ENCODE measurements at regions of chr15 and their contacts with region 1.

Region 1: DNA sequence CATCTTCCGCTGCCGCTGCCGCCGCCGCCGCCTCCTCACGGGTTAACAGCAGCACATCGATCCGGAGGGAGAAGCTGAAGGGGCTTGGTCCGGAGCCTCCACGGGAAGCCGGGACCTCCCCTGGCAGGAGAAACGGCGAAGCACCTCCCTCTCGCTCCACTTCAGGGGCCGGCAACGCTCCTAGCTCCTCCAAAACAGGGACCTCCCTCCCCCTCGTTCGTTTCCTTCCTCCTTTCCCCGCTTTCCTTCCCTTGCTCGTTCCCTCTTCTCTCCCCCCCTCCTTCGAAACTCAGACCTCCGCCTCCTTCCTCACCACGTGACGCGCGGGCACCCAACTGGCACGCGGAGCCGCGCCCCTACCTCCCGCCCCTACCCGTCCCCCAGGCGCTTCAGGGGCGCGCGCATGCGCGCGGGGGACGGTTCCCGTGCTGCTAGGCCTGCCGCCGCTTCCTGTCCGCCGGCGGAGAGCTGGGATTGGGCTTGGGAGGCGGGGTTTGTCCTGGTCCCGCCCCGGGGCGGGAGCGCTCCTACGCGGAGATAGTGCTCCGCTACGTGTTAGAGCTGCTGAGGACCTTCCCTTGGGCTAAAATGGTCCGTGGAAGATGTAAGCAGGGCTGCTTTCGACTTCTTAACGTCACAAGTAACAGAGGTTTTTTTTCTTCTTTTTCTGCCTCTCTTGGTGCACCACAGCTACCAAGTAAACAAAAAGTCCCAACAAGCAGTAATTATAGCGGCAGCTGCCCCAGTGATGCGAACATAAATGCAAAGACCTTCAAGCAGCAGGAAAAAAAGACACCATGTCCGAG is at the start of gene ADAM10:
- DNase-seq: peak; percentile 95
- ATAC-seq: peak; percentile 96
- H3K4me3 ChIP-seq: peak within 1 kb of the TSS; percentile 91 to 99 (median 95)
- H3K27ac ChIP-seq: peak within 1 kb of the TSS; percentile 97
- H3K4me1 ChIP-seq: peaks cover 32% of the 10 kb centered on the region
- H3K27me3 ChIP-seq: no peaks in the 10 kb centered on the region; a peak in 1 of 5 replicates
- CTCF ChIP-seq: peak; percentile 21; the same call in 1 of the 2 replicates
- EP300 ChIP-seq: no peak
- POLR2A ChIP-seq: peak; percentile 66 to 83
- RAD21 ChIP-seq: no peak
- total RNA-seq, gene ADAM10: 86.8 and 125 TPM in 2 replicates

Region 2: DNA sequence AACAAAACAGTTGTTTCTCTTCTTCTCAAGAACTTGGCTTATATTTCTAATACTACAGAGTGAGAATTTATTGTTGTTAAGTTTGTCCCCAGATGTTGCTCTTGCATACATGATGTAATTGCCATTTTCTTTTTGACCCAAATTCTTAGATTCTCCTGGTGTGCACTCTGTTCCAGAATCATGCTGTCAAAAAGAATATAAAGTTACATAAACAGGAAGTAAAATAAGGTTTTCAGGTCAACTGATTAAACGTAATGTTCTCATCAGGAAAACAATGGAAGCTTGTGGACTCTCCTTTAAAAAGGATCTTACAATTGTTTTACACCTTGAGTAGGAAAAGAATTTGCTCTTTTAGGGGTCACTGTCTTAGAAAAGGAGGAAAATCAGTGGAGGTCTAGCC is 122.0 kb before region 1 on chr15:
- CTCF ChIA-PET with region 1: no interaction called
- POLR2A ChIA-PET with region 1: no interaction called
- in situ Hi-C with region 1: no loop called
- intact Hi-C with region 1: no loop called
- DNase-seq: no peak
- ATAC-seq: no peak
- H3K4me3 ChIP-seq: no peak overlapping the region
- H3K27ac ChIP-seq: no peak overlapping the region
- H3K4me1 ChIP-seq: peaks cover 20% of the 10 kb centered on the region
- H3K27me3 ChIP-seq: no peaks in the 10 kb centered on the region
- CTCF ChIP-seq: no peak
- EP300 ChIP-seq: no peak
- POLR2A ChIP-seq: no peak
- RAD21 ChIP-seq: no peak

Region 3: GRCh38 chr15:58677426-58677825 is 72.3 kb before region 1 on chr15:
- CTCF ChIA-PET with region 1: no interaction called
- POLR2A ChIA-PET with region 1: no interaction called
- in situ Hi-C with region 1: no loop called
- intact Hi-C with region 1: loop called (anchors 10 kb)
- DNase-seq: no peak
- ATAC-seq: no peak
- H3K4me3 ChIP-seq: no peak overlapping the region
- H3K27ac ChIP-seq: no peak overlapping the region
- H3K4me1 ChIP-seq: no peaks in the 10 kb centered on the region
- H3K27me3 ChIP-seq: no peaks in the 10 kb centered on the region; a peak in 1 of 5 replicates
- CTCF ChIP-seq: no peak
- EP300 ChIP-seq: no peak
- POLR2A ChIP-seq: no peak
- RAD21 ChIP-seq: no peak